Ovary (tissue), 10 donors: ENCODE measurements at regions of chr10 and their contacts with region 1.

Region 1: GRCh38 chr10:71156436-71156835 is 55.9 kb upstream of the UNC5B start:
- DNase-seq: no peak
- H3K4me3 ChIP-seq: no peak overlapping the region
- H3K27ac ChIP-seq: no peak overlapping the region
- H3K4me1 ChIP-seq: no peaks in the 10 kb centered on the region
- H3K27me3 ChIP-seq: no peaks in the 10 kb centered on the region
- CTCF ChIP-seq: no peak
- EP300 ChIP-seq: no peak
- POLR2A ChIP-seq: no peak

Region 2: GRCh38 chr10:70982443-70982842 is 174.0 kb before region 1 on chr10:
- intact Hi-C with region 1: loop called in 1 of 4 experiments (anchors 10 kb)
- DNase-seq: no peak
- H3K4me3 ChIP-seq: no peak overlapping the region
- H3K27ac ChIP-seq: no peak overlapping the region
- H3K4me1 ChIP-seq: no peaks in the 10 kb centered on the region
- H3K27me3 ChIP-seq: no peaks in the 10 kb centered on the region
- CTCF ChIP-seq: no peak
- EP300 ChIP-seq: no peak
- POLR2A ChIP-seq: no peak

Region 3: GRCh38 chr10:71244431-71245419 is 88.3 kb after region 1 on chr10:
- intact Hi-C with region 1: no loop called
- DNase-seq: peak; percentile 67 to 76 (median 70)
- H3K4me3 ChIP-seq: peak overlapping the region; percentile 29
- H3K27ac ChIP-seq: peak overlapping the region; percentile 9 to 69
- H3K4me1 ChIP-seq: peaks cover 16% of the 10 kb centered on the region
- H3K27me3 ChIP-seq: no peaks in the 10 kb centered on the region
- CTCF ChIP-seq: no peak
- EP300 ChIP-seq: no peak
- POLR2A ChIP-seq: no peak

Region 4: GRCh38 chr10:71396084-71396720 is 239.8 kb after region 1 on chr10:
- intact Hi-C with region 1: no loop called
- DNase-seq: peak; percentile 79 to 86 (median 82)
- H3K4me3 ChIP-seq: peak overlapping the region; percentile 63
- H3K27ac ChIP-seq: peak overlapping the region; percentile 83 to 88
- H3K4me1 ChIP-seq: peaks cover 7% of the 10 kb centered on the region
- H3K27me3 ChIP-seq: no peaks in the 10 kb centered on the region
- CTCF ChIP-seq: peak; percentile 71 to 89 (median 87)
- EP300 ChIP-seq: no peak
- POLR2A ChIP-seq: no peak